ENCODE measurements at regions of chr5 and their contacts with region 1.

Region 1: DNA sequence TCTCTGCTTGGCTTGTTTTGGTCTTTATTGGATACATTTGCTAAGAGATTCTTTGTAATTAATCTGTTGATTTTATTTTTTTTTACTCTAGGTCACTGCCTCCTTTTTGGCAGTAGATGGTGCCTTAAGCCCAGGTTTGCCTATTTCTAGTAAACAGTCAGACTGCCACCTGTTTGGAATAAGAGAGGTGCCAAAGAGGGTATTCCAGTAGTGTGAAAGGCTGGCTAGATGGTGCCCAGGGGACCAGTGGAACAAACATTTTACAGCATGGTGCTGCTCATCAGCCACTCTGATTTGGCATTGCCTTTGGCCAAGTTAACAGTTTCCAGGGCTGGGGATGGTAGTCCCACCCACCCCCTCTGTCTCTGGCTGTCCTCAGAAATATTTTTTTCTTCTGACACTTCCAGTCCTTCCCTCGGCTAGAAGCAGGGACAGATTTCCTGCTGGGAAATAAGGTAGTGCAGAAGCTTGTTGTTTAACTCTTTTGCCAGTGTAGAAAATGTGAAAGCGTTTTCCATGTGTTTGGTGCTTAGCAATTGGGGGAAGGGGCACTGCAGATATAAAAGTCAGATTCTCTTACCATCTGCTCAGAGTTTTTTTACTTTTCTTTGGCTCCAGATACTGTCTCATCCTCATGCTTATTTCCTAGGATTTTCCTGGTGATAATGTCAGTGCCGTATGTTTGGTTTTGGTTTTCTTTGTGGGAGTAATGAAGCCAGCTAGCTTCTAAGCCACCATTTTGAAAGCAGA is 36.6 kb upstream of the FBXL7 start:
- ATAC-seq: peak in 2 of 8 experiments; percentile 35 to 69
- H3K4me3 ChIP-seq: no peak overlapping the region
- H3K27ac ChIP-seq: no peak overlapping the region
- H3K4me1 ChIP-seq: peaks cover 0 to 5% of the 10 kb centered on the region in 2 donors

Region 2: GRCh38 chr5:15168358-15168757 is 295.0 kb before region 1 on chr5:
- in situ Hi-C with region 1: no loop called
- ATAC-seq: no peak
- H3K4me3 ChIP-seq: no peak overlapping the region
- H3K27ac ChIP-seq: no peak overlapping the region
- H3K4me1 ChIP-seq: no peaks in the 10 kb centered on the region

Region 3: DNA sequence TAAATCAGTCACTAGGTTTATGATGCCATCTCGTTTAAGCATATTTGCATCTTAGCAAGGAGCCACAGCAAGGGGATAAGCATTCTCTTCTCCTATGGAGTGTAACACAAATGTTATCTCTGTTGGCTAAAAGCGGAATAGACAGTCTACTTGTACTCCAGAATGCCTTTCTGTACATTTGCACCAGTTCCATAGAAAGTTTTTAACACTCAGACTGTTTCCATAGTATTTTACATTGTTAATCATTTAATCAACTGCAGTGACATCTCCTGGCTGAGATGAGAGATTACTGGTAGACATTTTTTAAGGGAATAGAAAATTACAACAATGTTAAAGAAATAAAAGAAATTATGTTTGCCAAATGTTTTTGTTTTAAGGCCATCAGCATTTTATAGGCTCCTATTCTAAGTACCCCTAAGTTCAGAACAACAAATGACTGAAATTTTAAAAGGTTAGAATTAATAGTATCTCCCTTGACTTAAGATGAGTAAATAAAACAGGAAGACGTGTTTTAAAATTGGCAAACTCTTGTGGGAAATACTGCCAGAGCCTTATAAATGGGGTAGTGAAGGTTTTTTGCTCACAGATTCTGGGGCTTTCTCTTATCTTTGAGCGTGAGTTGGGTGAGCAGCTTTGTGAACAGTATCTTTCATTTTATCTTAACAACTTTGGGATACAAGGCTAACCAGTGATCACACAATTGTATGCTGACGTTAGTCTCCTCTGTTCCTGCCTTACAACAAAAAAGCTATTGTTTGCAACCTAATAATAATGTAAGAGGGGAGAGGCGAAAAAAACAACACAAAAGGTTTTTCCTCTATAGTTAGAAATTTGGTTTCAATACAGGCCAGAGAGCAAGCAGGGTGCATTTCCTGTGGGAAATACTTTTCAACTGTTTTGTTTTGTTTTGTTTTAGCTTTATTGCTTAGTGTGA is 330.9 kb after region 1 on chr5:
- in situ Hi-C with region 1: loop called in 2 of 9 experiments (anchors 25 kb)
- ATAC-seq: peak in 4 of 8 experiments; percentile 9 to 29 (median 22)
- H3K4me3 ChIP-seq: no peak overlapping the region
- H3K27ac ChIP-seq: no peak overlapping the region
- H3K4me1 ChIP-seq: peaks cover 0 to 16% of the 10 kb centered on the region in 2 donors

Region 4: DNA sequence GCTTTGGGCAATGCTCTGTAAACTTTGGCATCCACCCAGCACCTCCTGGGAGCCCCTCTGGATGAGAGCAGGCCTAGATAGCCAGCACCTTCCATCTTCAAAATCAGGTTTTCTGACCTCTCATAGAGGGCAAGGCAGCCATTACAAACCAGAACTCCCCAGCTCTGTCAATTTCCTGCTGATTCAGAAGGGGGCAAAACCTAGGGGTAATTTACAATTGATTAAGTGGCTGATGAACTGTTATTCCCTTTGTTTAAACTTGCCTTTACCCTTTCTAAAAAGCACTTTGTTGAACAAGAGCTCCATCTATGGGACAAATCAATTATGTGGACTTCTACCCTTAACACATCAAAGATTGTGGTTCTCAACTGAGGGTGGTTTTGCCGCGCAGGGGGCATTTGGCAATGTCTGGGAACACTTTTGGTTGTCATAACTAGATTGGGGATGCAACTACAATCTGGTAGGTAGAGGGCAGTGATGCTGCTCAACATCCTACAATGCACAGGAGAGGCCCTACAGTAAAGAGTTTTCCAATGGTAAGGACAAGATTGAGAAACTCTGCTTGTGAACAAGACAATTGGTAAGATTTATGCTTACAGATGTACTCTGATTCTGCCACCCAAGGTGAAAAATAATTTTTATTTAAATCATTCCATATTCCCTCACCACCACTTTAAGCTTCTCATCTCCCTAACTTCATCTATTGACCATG is 532.1 kb after region 1 on chr5:
- in situ Hi-C with region 1: loop called in 1 of 9 experiments (anchors 25 kb)
- ATAC-seq: peak in 4 of 8 experiments; percentile 52 to 80 (median 66)
- H3K4me3 ChIP-seq: no peak overlapping the region
- H3K27ac ChIP-seq: no peak overlapping the region
- H3K4me1 ChIP-seq: peaks cover 0 to 32% of the 10 kb centered on the region in 2 donors

Region 5: DNA sequence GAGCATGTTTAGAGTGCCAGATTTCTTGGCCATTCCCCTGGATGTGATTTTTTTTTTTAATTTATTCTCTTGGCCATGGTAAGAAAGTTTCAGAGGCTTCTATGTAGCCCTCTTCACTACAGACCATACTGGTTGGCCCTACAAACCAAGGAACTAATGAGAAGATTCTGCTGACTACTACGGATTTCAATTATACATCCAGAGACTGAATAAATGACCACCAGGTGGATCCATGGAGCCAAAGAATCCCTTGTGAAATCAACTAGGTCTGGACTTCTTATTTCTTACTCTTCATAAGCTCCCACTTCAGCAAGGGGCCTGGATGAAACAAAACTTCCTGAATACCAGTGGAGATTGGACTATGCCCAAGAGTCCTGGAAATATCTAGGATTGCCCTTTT is 974.6 kb after region 1 on chr5:
- in situ Hi-C with region 1: loop called in 1 of 9 experiments (anchors 25 kb)
- ATAC-seq: no peak
- H3K4me3 ChIP-seq: no peak overlapping the region
- H3K27ac ChIP-seq: no peak overlapping the region
- H3K4me1 ChIP-seq: peaks cover 2 to 7% of the 10 kb centered on the region in 2 donors

Measured in motor neuron (in vitro differentiated cells).